T-cell (primary cell): ENCODE measurements at regions of chr2 and their contacts with region 1.

Region 1: GRCh38 chr2:112606488-112606902 is 22.1 kb downstream of the CHCHD5 start:
- DNase-seq: no peak
- ATAC-seq: no peak
- H3K4me3 ChIP-seq: no peak overlapping the region
- H3K4me3 Mint-ChIP-seq: no peak overlapping the region
- H3K27ac ChIP-seq: no peak overlapping the region
- H3K27ac Mint-ChIP-seq: no peak overlapping the region
- H3K4me1 ChIP-seq: no peaks in the 10 kb centered on the region
- H3K4me1 Mint-ChIP-seq: no peaks in the 10 kb centered on the region
- H3K27me3 ChIP-seq: no peaks in the 10 kb centered on the region
- H3K27me3 Mint-ChIP-seq: no peaks in the 10 kb centered on the region

Region 2: DNA sequence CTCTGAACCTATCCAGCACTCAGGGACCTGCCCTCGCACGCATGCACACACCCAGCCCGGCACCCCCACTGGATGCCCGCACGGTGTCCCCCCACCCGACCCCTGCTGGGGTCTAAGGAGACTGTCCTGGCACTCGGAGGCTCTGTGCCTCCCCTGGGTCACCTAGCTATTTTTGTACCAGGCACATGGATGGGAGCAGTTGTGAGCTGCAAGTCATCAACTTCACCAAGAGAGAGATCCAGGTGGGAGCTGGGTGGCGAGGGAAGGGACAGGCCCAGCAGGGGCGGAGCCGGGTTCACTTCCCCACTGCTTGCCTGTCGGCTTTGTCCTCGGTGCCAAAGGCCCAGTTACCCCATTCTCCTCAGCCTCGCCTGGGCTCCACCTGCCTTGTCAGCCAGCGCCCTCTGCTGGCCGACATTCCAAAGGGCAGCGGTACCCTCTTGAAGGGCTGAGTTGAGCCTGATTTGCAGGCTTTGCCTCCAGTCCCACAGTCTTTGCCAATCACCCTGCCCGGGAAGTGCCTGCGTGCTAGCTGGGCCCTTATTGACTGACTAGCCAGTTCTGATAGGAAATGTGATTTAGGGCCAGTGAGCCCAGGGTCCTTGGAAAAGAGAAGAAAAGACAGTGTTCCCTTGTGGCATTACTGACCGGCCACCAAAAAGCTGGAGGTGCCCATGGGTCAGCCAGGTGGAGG is 120.1 kb after region 1 on chr2:
- CTCF ChIA-PET with region 1: interaction called, 3 to 38 read pairs
- POLR2A ChIA-PET with region 1: no interaction called
- DNase-seq: peak; percentile 65 to 92 (median 82)
- ATAC-seq: peak; percentile 92 to 99 (median 96)
- H3K4me3 ChIP-seq: no peak overlapping the region
- H3K4me3 Mint-ChIP-seq: no peak overlapping the region
- H3K27ac ChIP-seq: no peak overlapping the region
- H3K27ac Mint-ChIP-seq: no peak overlapping the region
- H3K4me1 ChIP-seq: peaks cover 0 to 9% of the 10 kb centered on the region in 2 experiments
- H3K4me1 Mint-ChIP-seq: peaks cover 5 to 8% (median 5%) of the 10 kb centered on the region in 3 donors
- H3K27me3 ChIP-seq: peaks cover 0 to 35% of the 10 kb centered on the region in 2 experiments
- H3K27me3 Mint-ChIP-seq: peaks cover 0 to 4% of the 10 kb centered on the region in 2 donors